ENCODE measurements at regions of chr12 and their contacts with region 1.

Region 1: DNA sequence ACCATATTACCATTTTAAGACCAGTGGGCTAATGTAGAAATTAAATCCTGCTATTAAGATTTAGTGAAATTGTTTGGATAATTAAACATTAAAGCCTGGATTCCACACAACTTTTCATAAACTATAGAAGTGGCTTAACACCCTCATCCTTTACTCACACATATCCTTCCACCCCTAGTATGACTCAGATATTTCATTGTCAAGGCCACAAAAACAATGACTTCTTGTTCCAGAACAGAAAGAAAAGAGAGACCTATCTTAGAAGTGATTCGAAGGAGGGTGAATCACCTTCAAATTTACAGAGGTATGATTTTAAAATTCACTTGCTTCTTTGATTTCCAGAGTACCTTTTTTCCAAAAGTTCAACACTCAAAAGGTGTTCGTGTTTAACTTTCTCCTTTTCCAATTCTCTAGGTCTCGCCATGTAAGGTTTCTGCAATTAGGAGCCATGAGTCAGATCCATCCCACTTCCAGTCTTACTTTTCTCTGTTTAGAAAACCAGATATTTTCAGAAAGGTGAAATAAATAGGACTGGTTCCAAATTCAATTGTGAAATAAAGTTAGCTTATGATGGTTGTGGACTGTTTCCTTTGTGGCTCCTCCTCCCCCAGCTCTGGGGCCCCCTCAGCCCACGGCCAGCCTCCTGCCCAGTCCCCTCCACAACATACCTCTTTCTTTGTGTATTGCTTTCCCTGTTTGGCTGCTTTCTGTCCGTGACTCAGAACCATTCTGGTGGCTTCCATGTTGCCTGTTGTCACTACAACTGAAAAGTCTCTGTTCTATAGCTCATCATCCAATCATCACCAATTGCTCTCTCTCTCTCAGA is 24.6 kb upstream of the MGP start:
- DNase-seq: peak; percentile 89
- H3K4me3 ChIP-seq: peak overlapping the region; percentile 7 to 31 (median 15)
- H3K27ac ChIP-seq: peak overlapping the region; percentile 97
- H3K4me1 ChIP-seq: peaks cover 48% of the 10 kb centered on the region
- H3K27me3 ChIP-seq: no peaks in the 10 kb centered on the region
- CTCF ChIP-seq: no peak

Region 2: GRCh38 chr12:14884458-14884878 is 25.8 kb before region 1 on chr12:
- CTCF ChIA-PET with region 1: no interaction called
- dilution Hi-C with region 1: no loop called
- in situ Hi-C with region 1: no loop called
- intact Hi-C with region 1: loop called (anchors 2 kb)
- DNase-seq: peak; percentile 82
- H3K4me3 ChIP-seq: peak overlapping the region in 1 of 3 experiments; percentile 22
- H3K27ac ChIP-seq: no peak overlapping the region
- H3K4me1 ChIP-seq: peaks cover 20% of the 10 kb centered on the region
- H3K27me3 ChIP-seq: no peaks in the 10 kb centered on the region
- CTCF ChIP-seq: no peak

Region 3: DNA sequence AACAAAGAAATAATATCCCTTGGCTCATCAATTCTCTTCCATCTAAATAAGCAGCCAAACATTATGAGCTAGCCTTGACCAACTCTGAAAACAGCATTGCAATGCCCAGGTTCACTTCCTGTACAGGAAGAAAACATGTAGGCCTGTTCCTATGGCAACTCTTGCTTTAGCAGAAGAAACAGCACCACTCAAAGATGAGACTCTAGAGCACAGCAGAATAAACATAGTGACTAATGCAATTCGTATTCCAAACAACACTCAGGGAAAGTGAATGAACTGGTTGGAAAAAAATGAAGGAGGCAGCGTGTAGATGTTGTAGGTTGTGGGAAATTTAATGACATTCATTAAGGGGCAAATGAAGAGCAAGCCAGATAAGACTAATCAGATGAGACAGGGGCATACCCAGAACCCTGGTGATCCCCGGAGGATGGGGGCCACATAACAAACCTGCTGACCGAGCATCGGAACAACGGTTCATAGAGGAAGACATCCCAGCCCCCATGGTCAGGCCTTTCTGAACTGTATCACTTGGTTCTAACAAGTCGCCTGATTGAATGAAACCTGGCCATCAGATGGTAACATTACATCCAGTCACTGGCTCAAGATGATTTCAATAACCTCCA is 42.1 kb after region 1 on chr12:
- CTCF ChIA-PET with region 1: no interaction called
- dilution Hi-C with region 1: no loop called
- in situ Hi-C with region 1: no loop called
- intact Hi-C with region 1: loop called (anchors 2 kb)
- DNase-seq: peak; percentile 95
- H3K4me3 ChIP-seq: no peak overlapping the region
- H3K27ac ChIP-seq: peak overlapping the region; percentile 95
- H3K4me1 ChIP-seq: peaks cover 40% of the 10 kb centered on the region
- H3K27me3 ChIP-seq: no peaks in the 10 kb centered on the region
- CTCF ChIP-seq: no peak